B cell (primary cell): ENCODE measurements at regions of chr2 and their contacts with region 1.

Region 1: GRCh38 chr2:172465417-172466334 is 38.3 kb downstream of the ITGA6 start:
- DNase-seq: peak; percentile 75
- ATAC-seq: peak; percentile 71
- H3K4me3 ChIP-seq: no peak overlapping the region
- H3K4me3 Mint-ChIP-seq: no peak overlapping the region
- H3K27ac ChIP-seq: no peak overlapping the region
- H3K27ac Mint-ChIP-seq: no peak overlapping the region
- H3K4me1 ChIP-seq: peaks cover 39 to 43% of the 10 kb centered on the region in 2 donors
- H3K4me1 Mint-ChIP-seq: peaks cover 49% of the 10 kb centered on the region
- H3K27me3 ChIP-seq: no peaks in the 10 kb centered on the region
- H3K27me3 Mint-ChIP-seq: peaks cover 8% of the 10 kb centered on the region
- CTCF ChIP-seq: peak; percentile 87

Region 2: GRCh38 chr2:170973492-170974303 is 1492.0 kb before region 1 on chr2:
- CTCF ChIA-PET with region 1: no interaction called
- POLR2A ChIA-PET with region 1: no interaction called
- intact Hi-C with region 1: loop called (anchors 10 kb)
- DNase-seq: peak; percentile 92
- ATAC-seq: peak; percentile 97
- H3K4me3 ChIP-seq: peak overlapping the region; percentile 43 to 86 (median 80)
- H3K4me3 Mint-ChIP-seq: peak overlapping the region; percentile 92
- H3K27ac ChIP-seq: peak overlapping the region; percentile 42 to 61
- H3K27ac Mint-ChIP-seq: peak overlapping the region; percentile 78
- H3K4me1 ChIP-seq: peaks cover 11 to 12% of the 10 kb centered on the region in 2 donors
- H3K4me1 Mint-ChIP-seq: peaks cover 12% of the 10 kb centered on the region
- H3K27me3 ChIP-seq: no peaks in the 10 kb centered on the region
- H3K27me3 Mint-ChIP-seq: no peaks in the 10 kb centered on the region
- CTCF ChIP-seq: peak; percentile 94

Region 3: DNA sequence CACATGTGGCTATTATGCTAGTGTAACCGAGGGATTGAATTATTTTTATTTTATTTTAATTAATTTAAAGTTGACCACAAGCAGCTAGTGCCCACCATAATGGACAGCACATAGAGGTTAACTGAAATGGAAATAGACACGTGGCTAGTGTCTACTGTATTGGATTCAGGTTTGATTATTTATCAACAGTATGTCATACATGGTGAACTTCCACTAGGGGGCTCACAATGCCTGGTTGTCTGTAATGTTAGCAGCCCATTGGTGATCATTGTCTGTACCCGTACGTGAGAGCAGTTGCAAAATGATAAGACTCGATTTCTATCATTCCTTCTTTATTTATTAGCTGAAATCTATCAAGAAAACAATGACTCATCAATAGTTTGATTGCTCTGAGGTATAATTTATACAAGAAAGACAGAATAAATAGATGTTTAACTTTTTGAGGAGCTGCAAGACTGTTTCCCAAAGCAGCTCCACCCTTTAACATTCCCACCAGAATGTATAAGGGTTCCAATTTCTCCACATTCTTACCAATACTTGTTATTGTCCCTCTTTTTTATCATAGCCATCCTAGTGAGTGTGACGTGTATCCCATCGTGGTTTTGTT is 866.9 kb before region 1 on chr2:
- CTCF ChIA-PET with region 1: interaction called, 11 read pairs
- POLR2A ChIA-PET with region 1: no interaction called
- intact Hi-C with region 1: loop called (anchors 1 kb)
- DNase-seq: peak; percentile 65
- ATAC-seq: peak; percentile 98
- H3K4me3 ChIP-seq: no peak overlapping the region
- H3K4me3 Mint-ChIP-seq: no peak overlapping the region
- H3K27ac ChIP-seq: no peak overlapping the region
- H3K27ac Mint-ChIP-seq: no peak overlapping the region
- H3K4me1 ChIP-seq: no peaks in the 10 kb centered on the region
- H3K4me1 Mint-ChIP-seq: peaks cover 1% of the 10 kb centered on the region
- H3K27me3 ChIP-seq: peaks cover 0 to 6% (median 1%) of the 10 kb centered on the region in 4 experiments
- H3K27me3 Mint-ChIP-seq: peaks cover 19% of the 10 kb centered on the region
- CTCF ChIP-seq: peak; percentile 97

Region 4: GRCh38 chr2:171703574-171704347 is 761.9 kb before region 1 on chr2:
- CTCF ChIA-PET with region 1: interaction called, 33 read pairs
- POLR2A ChIA-PET with region 1: no interaction called
- intact Hi-C with region 1: loop called (anchors 1 kb)
- DNase-seq: peak; percentile 52
- ATAC-seq: no peak
- H3K4me3 ChIP-seq: no peak overlapping the region
- H3K4me3 Mint-ChIP-seq: no peak overlapping the region
- H3K27ac ChIP-seq: no peak overlapping the region
- H3K27ac Mint-ChIP-seq: peak overlapping the region; percentile 81
- H3K4me1 ChIP-seq: peaks cover 7 to 8% of the 10 kb centered on the region in 2 donors
- H3K4me1 Mint-ChIP-seq: peaks cover 10% of the 10 kb centered on the region
- H3K27me3 ChIP-seq: no peaks in the 10 kb centered on the region
- H3K27me3 Mint-ChIP-seq: no peaks in the 10 kb centered on the region
- CTCF ChIP-seq: peak; percentile 71

Region 5: GRCh38 chr2:172172513-172173173 is 293.0 kb before region 1 on chr2:
- CTCF ChIA-PET with region 1: interaction called, 9 read pairs
- POLR2A ChIA-PET with region 1: no interaction called
- intact Hi-C with region 1: loop called (anchors 1 kb)
- DNase-seq: peak; percentile 55
- ATAC-seq: peak; percentile 31
- H3K4me3 ChIP-seq: peak overlapping the region in 4 of 5 experiments; percentile 21 to 51 (median 37)
- H3K4me3 Mint-ChIP-seq: peak overlapping the region; percentile 59
- H3K27ac ChIP-seq: no peak overlapping the region
- H3K27ac Mint-ChIP-seq: no peak overlapping the region
- H3K4me1 ChIP-seq: peaks cover 3 to 6% of the 10 kb centered on the region in 2 donors
- H3K4me1 Mint-ChIP-seq: peaks cover 4% of the 10 kb centered on the region
- H3K27me3 ChIP-seq: peaks cover 0 to 20% (median 14%) of the 10 kb centered on the region in 4 experiments
- H3K27me3 Mint-ChIP-seq: peaks cover 30% of the 10 kb centered on the region
- CTCF ChIP-seq: peak; percentile 30

Region 6: GRCh38 chr2:172381275-172382027 is 84.2 kb before region 1 on chr2:
- CTCF ChIA-PET with region 1: no interaction called
- POLR2A ChIA-PET with region 1: no interaction called
- intact Hi-C with region 1: no loop called
- DNase-seq: no peak
- ATAC-seq: no peak
- H3K4me3 ChIP-seq: no peak overlapping the region
- H3K4me3 Mint-ChIP-seq: no peak overlapping the region
- H3K27ac ChIP-seq: no peak overlapping the region
- H3K27ac Mint-ChIP-seq: no peak overlapping the region
- H3K4me1 ChIP-seq: peaks cover 6 to 7% of the 10 kb centered on the region in 2 donors
- H3K4me1 Mint-ChIP-seq: peaks cover 12% of the 10 kb centered on the region
- H3K27me3 ChIP-seq: peaks cover 0 to 6% (median 0%) of the 10 kb centered on the region in 4 experiments
- H3K27me3 Mint-ChIP-seq: peaks cover 10% of the 10 kb centered on the region
- CTCF ChIP-seq: no peak

Region 7: GRCh38 chr2:172449911-172450550 is 15.6 kb before region 1 on chr2:
- CTCF ChIA-PET with region 1: interaction called, 12 read pairs
- POLR2A ChIA-PET with region 1: no interaction called
- intact Hi-C with region 1: no loop called
- DNase-seq: no peak
- ATAC-seq: no peak
- H3K4me3 ChIP-seq: no peak overlapping the region
- H3K4me3 Mint-ChIP-seq: no peak overlapping the region
- H3K27ac ChIP-seq: no peak overlapping the region
- H3K27ac Mint-ChIP-seq: no peak overlapping the region
- H3K4me1 ChIP-seq: no peaks in the 10 kb centered on the region
- H3K4me1 Mint-ChIP-seq: no peaks in the 10 kb centered on the region
- H3K27me3 ChIP-seq: peaks cover 0 to 4% (median 1%) of the 10 kb centered on the region in 4 experiments
- H3K27me3 Mint-ChIP-seq: peaks cover 45% of the 10 kb centered on the region
- CTCF ChIP-seq: no peak